Kidney (tissue), 22 donors: ENCODE measurements at regions of chr12 and their contacts with region 1.

Region 1: DNA sequence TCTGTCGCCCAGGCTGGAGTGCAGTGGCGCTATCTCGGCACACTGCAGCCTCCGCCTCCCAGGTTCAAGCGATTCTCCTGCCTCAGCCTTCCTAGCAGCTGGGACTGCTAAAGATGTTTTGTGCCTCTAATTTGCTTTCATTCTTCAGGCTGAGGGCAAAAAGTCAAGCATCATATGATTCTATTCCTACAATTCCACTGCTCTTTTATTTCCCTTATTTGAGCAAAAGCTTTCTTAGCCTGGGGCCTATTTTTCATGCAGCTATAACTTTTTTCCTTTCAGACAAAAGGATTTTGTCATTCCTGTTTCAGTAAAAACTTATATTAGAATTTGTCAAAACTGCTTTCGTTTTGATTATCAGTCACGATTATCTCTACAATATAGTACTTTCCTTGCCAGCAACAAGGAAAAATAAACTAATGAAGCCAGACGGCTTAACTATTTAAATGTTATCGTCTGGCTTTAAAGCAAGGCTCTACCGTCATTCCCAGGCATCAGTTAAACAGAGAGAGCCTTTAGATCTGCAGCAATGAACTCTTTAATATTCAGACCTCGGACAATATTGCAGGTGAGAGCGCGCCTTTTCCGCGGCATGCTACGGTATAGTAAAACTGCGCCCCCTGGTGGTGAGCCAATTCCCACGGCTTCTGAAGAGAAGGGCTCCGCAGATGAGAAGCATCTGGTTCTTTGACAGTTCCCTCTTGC is 1.4 kb upstream of the SLC2A13 start:
- DNase-seq: peak; percentile 85 to 93 (median 91)
- H3K4me3 ChIP-seq: peak overlapping the region in 2 of 3 donors; percentile 70 to 74
- H3K27ac ChIP-seq: no peak overlapping the region
- H3K4me1 ChIP-seq: peaks cover 0 to 6% (median 0%) of the 10 kb centered on the region in 3 donors
- H3K27me3 ChIP-seq: no peaks in the 10 kb centered on the region
- CTCF ChIP-seq: peak; percentile 92

Region 2: DNA sequence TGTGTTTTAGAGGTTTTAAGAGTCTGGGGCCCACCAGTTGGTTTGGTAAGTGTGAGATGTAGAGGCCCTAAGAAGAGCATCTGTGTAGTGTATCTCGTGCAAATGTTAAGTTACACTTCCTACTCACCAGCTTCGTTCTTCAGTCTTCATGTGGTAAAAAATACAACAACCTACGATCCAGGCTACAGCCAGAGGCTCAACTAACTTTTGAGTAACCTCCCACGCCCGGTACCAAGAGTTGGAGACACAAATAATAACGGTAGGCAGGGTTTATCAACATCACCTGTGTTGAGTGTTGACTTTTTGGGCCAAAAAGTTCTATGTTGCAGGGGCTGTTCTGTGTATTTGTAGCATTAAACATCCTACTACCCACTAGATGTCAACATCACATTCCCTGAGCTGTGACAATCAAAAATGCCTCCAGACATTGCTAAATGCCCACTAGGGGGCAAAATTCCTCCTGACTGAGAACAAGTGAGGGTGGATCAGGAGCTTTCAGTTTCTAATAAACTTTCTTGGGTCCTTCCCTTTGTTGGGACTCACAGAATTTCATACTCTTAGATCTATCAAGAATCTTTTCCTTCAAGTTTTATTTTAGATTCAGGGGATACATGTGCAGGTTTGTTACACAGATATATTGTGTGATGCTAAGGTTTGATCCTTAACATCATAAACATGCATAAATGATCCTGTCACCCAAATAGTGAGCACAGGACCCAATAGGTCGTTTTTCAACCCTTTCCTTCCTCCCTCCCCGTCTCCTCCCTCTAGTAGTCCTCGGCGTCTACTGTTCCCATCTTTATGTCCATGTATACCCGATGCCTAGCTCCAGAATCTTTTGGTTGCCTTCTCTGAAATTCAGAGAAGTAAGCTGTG is 96.1 kb before region 1 on chr12:
- intact Hi-C with region 1: loop called (anchors 10 kb)
- DNase-seq: peak in 3 of 5 donors; percentile 34 to 69 (median 55)
- H3K4me3 ChIP-seq: peak overlapping the region in 2 of 3 donors; percentile 5 to 46
- H3K27ac ChIP-seq: no peak overlapping the region
- H3K4me1 ChIP-seq: peaks cover 0 to 4% (median 0%) of the 10 kb centered on the region in 3 donors
- H3K27me3 ChIP-seq: no peaks in the 10 kb centered on the region
- CTCF ChIP-seq: peak; percentile 80

Region 3: DNA sequence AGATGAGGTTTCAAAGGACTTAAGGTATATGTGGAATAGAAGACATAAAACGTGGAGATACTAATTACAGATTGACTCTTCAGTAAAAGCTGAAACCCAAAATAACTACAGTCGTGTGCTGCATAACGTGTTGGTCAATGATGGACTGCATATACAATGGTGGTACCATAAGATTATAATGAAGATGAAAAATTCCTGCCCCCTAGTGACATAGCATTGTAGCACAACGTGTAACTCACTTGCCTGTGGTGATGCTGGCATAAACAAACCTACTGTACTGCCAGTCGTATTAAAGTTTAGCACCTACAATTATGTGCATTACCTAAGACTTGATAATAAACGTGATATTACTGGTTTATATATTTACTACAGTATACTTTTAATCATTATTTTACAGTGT is 267.8 kb after region 1 on chr12:
- intact Hi-C with region 1: no loop called
- DNase-seq: no peak
- H3K4me3 ChIP-seq: no peak overlapping the region
- H3K27ac ChIP-seq: no peak overlapping the region
- H3K4me1 ChIP-seq: no peaks in the 10 kb centered on the region
- H3K27me3 ChIP-seq: no peaks in the 10 kb centered on the region
- CTCF ChIP-seq: no peak